Activated T-helper 2 cell treated with anti-CD3 and anti-CD28 coated beads, Interferon-gamma antibody, Interleukin-2, Interleukin-4, amounts not matched to agents 10 μg/mL and 5 μg/mL and 100 μg/mL, durations not matched to agents 14 hours and 24 hours and 36 hours (primary cell): ENCODE measurements at regions of chr10 and their contacts with region 1.

Region 1: DNA sequence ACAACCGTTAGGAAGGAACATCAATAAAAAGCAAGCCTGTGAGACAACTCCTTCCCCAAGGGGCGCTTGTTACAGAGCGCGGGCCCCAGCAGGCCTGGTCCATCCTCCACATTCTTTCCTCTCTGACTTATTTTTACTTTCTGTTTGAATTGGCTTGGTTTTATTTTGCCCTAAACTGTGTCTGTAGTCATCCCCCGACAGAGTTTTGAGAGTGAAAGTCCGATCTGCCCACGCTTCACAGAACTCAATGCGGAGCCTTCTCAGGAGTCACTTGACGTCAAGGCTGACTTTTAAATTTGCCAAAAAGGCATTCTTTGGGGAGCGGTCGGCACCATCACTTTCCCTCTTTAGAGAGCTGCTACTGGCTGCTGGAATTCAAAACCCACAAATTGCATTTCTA is 150.1 kb upstream of the KLF6 start:
- DNase-seq: peak; percentile 71
- H3K4me3 Mint-ChIP-seq: peak overlapping the region; percentile 43
- H3K27ac Mint-ChIP-seq: peak overlapping the region; percentile 92
- H3K4me1 Mint-ChIP-seq: peaks cover 58% of the 10 kb centered on the region
- H3K27me3 Mint-ChIP-seq: no peaks in the 10 kb centered on the region

Region 2: DNA sequence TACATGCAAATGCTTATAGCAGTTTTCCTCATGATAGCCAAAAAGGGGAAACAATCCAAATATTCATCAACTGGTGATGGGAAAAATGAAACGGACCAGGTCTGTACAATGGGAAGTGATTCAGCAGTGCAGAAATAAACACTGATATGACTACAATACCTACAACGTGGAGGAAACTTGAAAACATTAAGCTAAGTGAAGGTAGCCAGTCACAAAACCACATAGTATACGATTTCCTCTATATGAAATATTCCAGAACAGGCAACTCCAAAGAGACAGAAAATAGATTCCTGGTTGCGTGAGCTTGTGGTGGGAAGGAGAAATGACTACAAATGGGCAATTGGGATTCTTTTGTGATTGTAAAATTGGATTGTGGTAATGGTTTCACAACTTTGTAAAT is 499.5 kb before region 1 on chr10:
- intact Hi-C with region 1: no loop called
- DNase-seq: no peak
- H3K4me3 Mint-ChIP-seq: no peak overlapping the region
- H3K27ac Mint-ChIP-seq: no peak overlapping the region
- H3K4me1 Mint-ChIP-seq: peaks cover 3% of the 10 kb centered on the region
- H3K27me3 Mint-ChIP-seq: peaks cover 18% of the 10 kb centered on the region

Region 3: GRCh38 chr10:3740157-3740871 is 194.8 kb before region 1 on chr10:
- intact Hi-C with region 1: no loop called
- DNase-seq: no peak
- H3K4me3 Mint-ChIP-seq: no peak overlapping the region
- H3K27ac Mint-ChIP-seq: no peak overlapping the region
- H3K4me1 Mint-ChIP-seq: peaks cover 27% of the 10 kb centered on the region
- H3K27me3 Mint-ChIP-seq: peaks cover 5% of the 10 kb centered on the region

Region 4: DNA sequence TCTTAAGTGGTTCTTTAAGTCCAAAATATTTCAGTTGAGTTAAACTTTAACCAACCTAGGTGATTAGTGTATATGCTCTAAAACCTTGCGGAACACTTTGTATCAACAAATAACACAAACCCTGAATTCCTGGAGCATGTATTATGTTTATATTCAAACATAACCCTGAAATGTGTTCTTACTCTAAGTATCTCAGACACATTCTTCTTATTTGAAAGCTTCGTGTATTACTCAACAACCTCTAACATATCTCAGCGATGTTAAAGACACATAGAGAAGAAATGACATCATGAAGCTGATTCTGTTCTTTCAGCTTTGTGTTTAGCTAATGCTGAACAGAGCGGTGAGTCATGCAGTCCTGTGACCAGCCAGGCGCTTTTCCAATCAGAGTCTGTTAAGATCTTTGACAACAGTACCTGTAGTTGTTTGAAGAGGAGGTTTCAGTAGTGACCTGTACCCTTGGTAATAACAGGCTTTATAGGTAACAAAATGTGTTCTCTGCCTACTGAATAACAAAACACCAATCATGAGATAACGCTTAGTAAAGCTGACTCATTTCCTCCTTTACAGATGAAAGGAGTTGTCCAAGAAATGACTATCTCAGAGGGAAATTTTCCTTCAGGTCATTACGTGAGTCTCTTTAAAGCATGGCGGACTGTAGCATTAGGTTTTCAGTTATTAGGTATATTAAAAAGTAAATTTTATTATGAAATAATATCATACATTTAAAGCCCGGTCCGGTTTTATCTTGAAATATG is 82.8 kb before region 1 on chr10:
- intact Hi-C with region 1: loop called (anchors 1 kb)
- DNase-seq: peak; percentile 59
- H3K4me3 Mint-ChIP-seq: peak overlapping the region; percentile 9
- H3K27ac Mint-ChIP-seq: peak overlapping the region; percentile 79
- H3K4me1 Mint-ChIP-seq: peaks cover 42% of the 10 kb centered on the region
- H3K27me3 Mint-ChIP-seq: no peaks in the 10 kb centered on the region

Region 5: GRCh38 chr10:3873728-3874461 is 61.2 kb before region 1 on chr10:
- intact Hi-C with region 1: loop called (anchors 1 kb)
- DNase-seq: no peak
- H3K4me3 Mint-ChIP-seq: no peak overlapping the region
- H3K27ac Mint-ChIP-seq: peak overlapping the region; percentile 84
- H3K4me1 Mint-ChIP-seq: peaks cover 55% of the 10 kb centered on the region
- H3K27me3 Mint-ChIP-seq: no peaks in the 10 kb centered on the region

Region 6: DNA sequence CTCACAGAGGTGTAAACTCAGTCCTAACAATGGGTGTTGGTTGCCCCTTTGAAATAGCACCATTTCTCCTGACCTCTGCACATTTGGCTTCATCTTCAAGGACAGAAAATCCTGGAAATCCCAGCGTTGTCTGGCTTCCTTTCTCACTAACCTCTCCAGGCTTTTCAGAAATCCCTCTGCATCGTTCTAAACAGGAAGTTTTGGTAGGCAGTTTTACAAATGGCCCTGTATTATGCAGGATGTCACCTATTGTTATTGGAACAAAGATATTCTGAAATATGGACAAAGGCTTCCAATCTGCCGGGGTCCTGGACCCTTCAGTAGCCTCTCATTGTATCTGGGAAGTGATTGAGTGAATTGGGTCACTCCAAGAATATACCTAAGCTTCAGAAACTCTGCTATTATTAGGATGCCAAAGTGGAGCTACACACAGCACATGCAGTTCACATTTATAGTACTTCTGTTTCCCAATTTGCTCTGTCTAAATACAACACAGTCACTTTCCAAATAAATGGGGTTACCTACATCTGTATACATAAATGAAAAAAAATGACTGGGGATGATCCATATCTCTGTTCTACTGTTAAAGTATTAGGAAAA is 15.3 kb before region 1 on chr10:
- intact Hi-C with region 1: no loop called
- DNase-seq: no peak
- H3K4me3 Mint-ChIP-seq: no peak overlapping the region
- H3K27ac Mint-ChIP-seq: no peak overlapping the region
- H3K4me1 Mint-ChIP-seq: no peaks in the 10 kb centered on the region
- H3K27me3 Mint-ChIP-seq: no peaks in the 10 kb centered on the region

Region 7: DNA sequence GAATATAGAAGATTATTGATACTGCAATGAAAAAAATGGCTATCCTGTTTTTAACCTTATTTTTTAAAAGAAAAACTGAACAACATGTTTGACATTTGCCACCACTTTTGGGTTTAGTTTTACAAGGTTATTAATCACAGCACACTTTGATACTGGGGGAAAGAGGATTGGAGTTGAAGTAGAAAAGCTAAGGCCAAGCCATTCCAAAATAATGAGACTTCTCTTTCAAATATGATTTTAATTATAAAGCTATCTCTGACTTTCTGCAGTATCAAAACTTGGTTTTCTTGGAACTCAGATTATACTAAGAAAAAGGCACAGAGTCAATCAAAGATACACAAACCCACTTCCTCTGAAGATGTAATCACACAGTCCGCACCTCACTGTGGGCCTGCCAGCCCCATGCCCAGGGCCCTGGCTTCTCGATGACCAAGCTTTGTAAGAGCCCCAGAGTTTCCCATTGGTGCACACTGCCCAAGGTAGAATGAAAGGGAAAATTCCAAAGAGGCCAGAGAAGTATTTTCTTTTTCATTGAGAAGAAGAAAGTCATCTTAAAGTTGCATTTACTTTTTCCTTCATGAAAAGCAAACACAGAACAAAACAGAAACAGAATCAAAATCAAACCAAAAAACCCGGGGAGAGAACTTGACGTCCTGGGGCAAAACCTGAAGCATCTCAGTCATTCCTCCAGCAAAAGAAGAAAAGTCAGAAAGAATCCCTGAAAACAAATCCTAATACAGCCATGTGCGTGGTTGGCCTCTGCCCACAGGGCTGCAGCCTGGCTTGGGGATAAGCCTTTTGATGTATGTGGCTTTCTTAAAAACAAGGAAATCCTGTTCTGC is 37.5 kb after region 1 on chr10:
- intact Hi-C with region 1: loop called (anchors 2 kb)
- DNase-seq: no peak
- H3K4me3 Mint-ChIP-seq: peak overlapping the region; percentile 68
- H3K27ac Mint-ChIP-seq: peak overlapping the region; percentile 95
- H3K4me1 Mint-ChIP-seq: peaks cover 42% of the 10 kb centered on the region
- H3K27me3 Mint-ChIP-seq: no peaks in the 10 kb centered on the region

Region 8: GRCh38 chr10:4034907-4035598 is 99.9 kb after region 1 on chr10:
- intact Hi-C with region 1: loop called (anchors 1 kb)
- DNase-seq: peak; percentile 15
- H3K4me3 Mint-ChIP-seq: peak overlapping the region; percentile 61
- H3K27ac Mint-ChIP-seq: peak overlapping the region; percentile 84
- H3K4me1 Mint-ChIP-seq: peaks cover 36% of the 10 kb centered on the region
- H3K27me3 Mint-ChIP-seq: peaks cover 2% of the 10 kb centered on the region

Region 9: GRCh38 chr10:4241724-4242345 is 306.7 kb after region 1 on chr10:
- intact Hi-C with region 1: loop called (anchors 10 kb)
- DNase-seq: no peak
- H3K4me3 Mint-ChIP-seq: no peak overlapping the region
- H3K27ac Mint-ChIP-seq: no peak overlapping the region
- H3K4me1 Mint-ChIP-seq: peaks cover 33% of the 10 kb centered on the region
- H3K27me3 Mint-ChIP-seq: peaks cover 3% of the 10 kb centered on the region